Naive thymus-derived CD4-positive, alpha-beta T cell (primary cell): ENCODE measurements at regions of chrX and their contacts with region 1.

Region 1: GRCh38 chrX:55717521-55718497 is at the start of gene RRAGB:
- DNase-seq: peak; percentile 67 to 92 (median 88)
- ATAC-seq: peak; percentile 99
- H3K4me3 ChIP-seq: peak within 1 kb of the TSS; percentile 88
- H3K4me3 Mint-ChIP-seq: peak within 1 kb of the TSS; percentile 78 to 96 (median 88)
- H3K27ac ChIP-seq: peak within 1 kb of the TSS; percentile 86
- H3K27ac Mint-ChIP-seq: peak within 1 kb of the TSS; percentile 82 to 95 (median 90)
- H3K4me1 ChIP-seq: peaks cover 13 to 16% of the 10 kb centered on the region in 2 donors
- H3K4me1 Mint-ChIP-seq: peaks cover 23 to 53% (median 37%) of the 10 kb centered on the region in 7 donors
- H3K27me3 ChIP-seq: no peaks in the 10 kb centered on the region
- H3K27me3 Mint-ChIP-seq: no peaks in the 10 kb centered on the region
- total RNA-seq, gene RRAGB: 11.9 to 15.9 (median 12.9) TPM

Region 2: DNA sequence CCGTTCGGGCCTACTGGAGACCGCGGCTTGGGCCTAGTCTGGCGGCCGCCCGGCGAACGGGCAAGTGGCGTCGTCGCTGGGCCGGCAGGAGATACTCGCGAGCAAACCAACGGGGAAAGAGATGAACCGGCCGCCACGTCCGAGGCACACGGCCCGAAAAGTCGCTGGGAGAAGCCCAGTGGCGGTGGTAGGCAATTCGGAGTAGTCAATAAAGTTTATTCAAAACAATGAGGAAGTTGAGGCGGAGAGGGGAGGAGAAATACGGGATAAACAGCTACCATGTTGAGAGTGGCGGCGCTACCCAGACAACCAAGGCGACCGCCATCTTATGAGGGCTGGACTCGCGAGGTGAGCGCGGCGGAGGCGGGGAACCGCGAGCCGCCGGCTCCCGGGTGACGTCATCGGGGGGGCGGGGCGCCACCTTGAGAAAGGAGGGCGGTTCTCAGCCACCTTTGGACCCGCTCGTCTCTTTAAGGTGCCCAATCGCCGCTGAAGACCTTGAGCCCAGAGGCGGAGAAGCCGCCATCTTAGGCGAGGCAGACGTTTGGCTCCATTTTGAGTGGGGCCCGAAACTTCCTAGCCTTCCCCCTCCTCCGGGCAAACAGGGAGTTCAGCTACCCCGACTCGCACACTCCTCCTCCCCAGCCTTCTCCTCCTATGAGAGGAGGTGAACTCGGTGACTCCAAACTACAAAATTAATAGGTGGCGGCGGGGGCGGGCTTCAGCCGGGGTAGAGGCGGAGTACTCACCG is 1673.5 kb before region 1 on chrX and contains the start of gene PHF8:
- CTCF ChIA-PET with region 1: no interaction called
- POLR2A ChIA-PET with region 1: no interaction called
- intact Hi-C with region 1: loop called (anchors 5 to 10 kb)
- DNase-seq: peak; percentile 84 to 96 (median 94)
- ATAC-seq: peak; percentile 90
- H3K4me3 ChIP-seq: peak within 1 kb of the TSS; percentile 80
- H3K4me3 Mint-ChIP-seq: peak within 1 kb of the TSS; percentile 84 to 96 (median 94)
- H3K27ac ChIP-seq: peak within 1 kb of the TSS; percentile 95
- H3K27ac Mint-ChIP-seq: peak within 1 kb of the TSS; percentile 93 to 99 (median 97)
- H3K4me1 ChIP-seq: peaks cover 9% of the 10 kb centered on the region in 2 donors
- H3K4me1 Mint-ChIP-seq: peaks cover 8 to 33% (median 17%) of the 10 kb centered on the region in 7 donors
- H3K27me3 ChIP-seq: no peaks in the 10 kb centered on the region
- H3K27me3 Mint-ChIP-seq: no peaks in the 10 kb centered on the region
- total RNA-seq, gene PHF8: 48.5 to 80.2 (median 54.5) TPM

Region 3: DNA sequence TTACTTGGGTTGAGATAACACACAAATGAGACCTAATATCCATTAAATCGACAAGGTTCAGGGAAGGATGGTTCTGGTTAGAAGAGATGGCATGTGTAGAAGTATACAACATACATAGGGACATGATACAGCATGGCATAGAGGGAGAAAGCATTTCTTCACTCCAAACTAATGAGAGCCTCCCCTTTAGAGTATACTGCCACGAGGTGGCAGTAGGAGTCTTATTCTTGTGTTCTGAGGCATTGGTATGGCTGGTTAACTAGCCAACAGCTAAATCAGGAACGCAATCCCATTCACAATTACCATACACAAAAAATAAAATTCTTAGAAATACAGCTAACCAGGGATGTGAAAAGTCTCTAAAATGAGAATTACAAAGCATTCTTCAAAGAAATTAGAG is 826.2 kb before region 1 on chrX:
- CTCF ChIA-PET with region 1: no interaction called
- POLR2A ChIA-PET with region 1: no interaction called
- intact Hi-C with region 1: loop called in 1 of 2 experiments (anchors 5 kb)
- DNase-seq: peak in 7 of 9 donors; percentile 11 to 54 (median 40)
- ATAC-seq: peak; percentile 60
- H3K4me3 ChIP-seq: no peak overlapping the region
- H3K4me3 Mint-ChIP-seq: no peak overlapping the region
- H3K27ac ChIP-seq: no peak overlapping the region
- H3K27ac Mint-ChIP-seq: no peak overlapping the region
- H3K4me1 ChIP-seq: no peaks in the 10 kb centered on the region
- H3K4me1 Mint-ChIP-seq: peaks cover 0 to 1% (median 0%) of the 10 kb centered on the region in 7 donors
- H3K27me3 ChIP-seq: no peaks in the 10 kb centered on the region
- H3K27me3 Mint-ChIP-seq: peaks cover 0 to 9% (median 4%) of the 10 kb centered on the region in 5 donors

Region 4: GRCh38 chrX:55135171-55135570 is 582.6 kb before region 1 on chrX:
- CTCF ChIA-PET with region 1: no interaction called
- POLR2A ChIA-PET with region 1: no interaction called
- intact Hi-C with region 1: loop called in 1 of 2 experiments (anchors 1 kb)
- DNase-seq: peak in 7 of 9 donors; percentile 3 to 45 (median 17)
- ATAC-seq: no peak
- H3K4me3 ChIP-seq: no peak overlapping the region
- H3K4me3 Mint-ChIP-seq: no peak overlapping the region
- H3K27ac ChIP-seq: no peak overlapping the region
- H3K27ac Mint-ChIP-seq: no peak overlapping the region
- H3K4me1 ChIP-seq: no peaks in the 10 kb centered on the region
- H3K4me1 Mint-ChIP-seq: peaks cover 0 to 5% (median 0%) of the 10 kb centered on the region in 7 donors
- H3K27me3 ChIP-seq: no peaks in the 10 kb centered on the region
- H3K27me3 Mint-ChIP-seq: no peaks in the 10 kb centered on the region

Region 5: DNA sequence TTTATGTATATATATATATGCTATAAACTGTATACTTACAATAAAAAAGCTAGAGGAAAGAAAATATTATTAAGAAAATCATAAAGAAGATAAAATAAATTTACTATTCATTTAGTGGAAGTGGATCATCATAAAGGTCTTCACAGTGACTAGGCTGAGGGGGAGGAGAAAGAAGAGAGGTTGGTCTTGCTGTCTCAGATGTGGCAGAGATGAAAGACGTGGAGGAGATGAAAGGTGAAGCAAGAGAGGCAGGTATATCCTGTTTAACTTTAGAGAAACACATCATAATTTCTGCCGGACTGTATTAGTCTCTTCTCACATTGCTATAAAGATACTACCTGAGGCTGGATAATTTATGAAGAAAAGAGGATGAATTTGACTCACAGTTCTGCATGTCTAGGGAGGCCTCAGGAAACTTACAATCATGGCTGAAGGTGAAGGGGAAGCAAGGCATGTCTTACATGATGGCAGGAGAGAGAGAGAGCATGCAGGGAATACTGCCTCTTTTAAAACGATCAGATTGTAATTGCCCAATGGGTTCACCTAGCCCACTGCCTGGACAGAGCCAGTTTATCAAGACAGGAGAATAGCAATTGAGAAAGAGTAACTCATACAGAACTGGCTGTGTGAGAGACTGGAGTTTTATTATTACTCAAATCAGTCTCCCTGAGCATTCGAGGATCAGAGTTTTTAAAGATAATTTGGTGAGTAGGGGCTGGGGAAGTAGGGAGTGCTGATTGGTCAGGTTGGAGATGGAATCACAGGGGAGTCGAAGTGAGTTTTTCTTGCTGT is 22.4 kb before region 1 on chrX:
- CTCF ChIA-PET with region 1: interaction called, 4 read pairs
- POLR2A ChIA-PET with region 1: interaction called, 9 read pairs
- intact Hi-C with region 1: loop called in 1 of 2 experiments (anchors 1 kb)
- DNase-seq: peak in 7 of 9 donors; percentile 44 to 74 (median 61)
- ATAC-seq: peak; percentile 89
- H3K4me3 ChIP-seq: no peak overlapping the region
- H3K4me3 Mint-ChIP-seq: peak overlapping the region; percentile 30 to 84 (median 74)
- H3K27ac ChIP-seq: peak overlapping the region; percentile 3
- H3K27ac Mint-ChIP-seq: peak overlapping the region in 8 of 9 donors; percentile 45 to 89 (median 76)
- H3K4me1 ChIP-seq: peaks cover 0 to 24% of the 10 kb centered on the region in 2 donors
- H3K4me1 Mint-ChIP-seq: peaks cover 11 to 58% (median 49%) of the 10 kb centered on the region in 7 donors
- H3K27me3 ChIP-seq: no peaks in the 10 kb centered on the region
- H3K27me3 Mint-ChIP-seq: no peaks in the 10 kb centered on the region

Region 6: DNA sequence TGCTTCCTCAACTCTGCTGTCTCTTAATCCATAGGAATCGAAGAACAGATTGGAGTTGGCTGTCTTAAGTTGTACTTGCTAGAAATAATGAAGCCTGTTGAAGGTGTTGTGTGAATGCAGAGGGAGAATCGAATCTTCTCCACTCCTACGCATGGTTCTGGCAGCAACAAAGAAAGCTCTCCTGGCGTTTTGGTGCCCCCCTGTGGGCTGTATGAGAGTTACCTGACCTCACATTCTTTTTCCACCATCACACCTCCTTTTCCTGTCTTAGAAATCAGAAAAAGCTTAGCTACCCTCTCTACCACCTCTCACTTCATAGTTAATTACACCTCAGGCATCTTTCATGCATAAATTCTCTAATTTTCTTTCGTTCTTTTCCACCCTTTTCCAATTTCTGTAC is 530.7 kb after region 1 on chrX:
- CTCF ChIA-PET with region 1: no interaction called
- POLR2A ChIA-PET with region 1: no interaction called
- intact Hi-C with region 1: loop called (anchors 5 kb)
- DNase-seq: peak; percentile 11 to 64 (median 47)
- ATAC-seq: peak; percentile 77
- H3K4me3 ChIP-seq: no peak overlapping the region
- H3K4me3 Mint-ChIP-seq: no peak overlapping the region
- H3K27ac ChIP-seq: no peak overlapping the region
- H3K27ac Mint-ChIP-seq: peak overlapping the region in 1 of 9 donors; percentile 48
- H3K4me1 ChIP-seq: no peaks in the 10 kb centered on the region
- H3K4me1 Mint-ChIP-seq: peaks cover 0 to 19% (median 0%) of the 10 kb centered on the region in 7 donors
- H3K27me3 ChIP-seq: no peaks in the 10 kb centered on the region
- H3K27me3 Mint-ChIP-seq: no peaks in the 10 kb centered on the region

Region 7: DNA sequence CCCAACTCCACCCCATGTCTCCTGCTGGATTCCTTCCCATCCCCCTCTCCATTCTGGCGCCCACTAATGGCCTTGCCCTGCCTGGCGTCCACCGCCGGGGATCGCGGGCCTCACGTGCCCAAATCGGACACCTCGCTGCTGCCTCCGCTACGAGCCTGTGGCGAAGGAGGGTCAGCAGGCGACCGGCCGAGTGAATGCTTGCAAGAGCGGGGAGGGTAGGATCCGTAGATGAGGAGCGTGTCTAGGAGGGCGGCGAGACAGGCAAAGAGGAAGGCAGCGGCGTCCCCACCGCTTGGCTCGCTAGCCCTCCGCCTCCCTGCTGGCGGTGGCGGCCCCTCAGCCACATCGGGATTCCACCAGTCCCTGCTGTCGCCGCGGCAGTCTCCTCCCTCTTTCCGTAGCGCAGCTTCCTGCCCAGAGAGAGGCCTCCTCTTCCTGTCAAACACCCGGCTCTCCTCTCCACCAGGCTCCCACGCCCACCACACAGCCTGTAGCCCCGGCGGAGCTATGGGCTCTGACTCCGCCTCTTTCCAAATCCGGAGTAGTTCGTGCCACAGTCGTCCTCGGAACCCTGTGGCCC is 1403.4 kb after region 1 on chrX and contains the start of gene SPIN2B:
- CTCF ChIA-PET with region 1: no interaction called
- POLR2A ChIA-PET with region 1: no interaction called
- intact Hi-C with region 1: loop called in 1 of 2 experiments (anchors 5 kb)
- DNase-seq: peak; percentile 27 to 76 (median 68)
- ATAC-seq: peak; percentile 99
- H3K4me3 ChIP-seq: peak within 1 kb of the TSS; percentile 57
- H3K4me3 Mint-ChIP-seq: peak within 1 kb of the TSS; percentile 90 to 95 (median 93)
- H3K27ac ChIP-seq: peak within 1 kb of the TSS; percentile 62
- H3K27ac Mint-ChIP-seq: peak within 1 kb of the TSS; percentile 72 to 96 (median 91)
- H3K4me1 ChIP-seq: no peaks in the 10 kb centered on the region
- H3K4me1 Mint-ChIP-seq: peaks cover 5 to 14% (median 11%) of the 10 kb centered on the region in 7 donors
- H3K27me3 ChIP-seq: no peaks in the 10 kb centered on the region
- H3K27me3 Mint-ChIP-seq: no peaks in the 10 kb centered on the region
- total RNA-seq, gene SPIN2B: 9.0 to 19.7 (median 14.0) TPM